ENCODE measurements at regions of chr2 and their contacts with region 1.

Region 1: GRCh38 chr2:216206041-216206703 is 97.0 kb downstream of the XRCC5 start:
- DNase-seq: no peak
- ATAC-seq: peak; percentile 88
- H3K4me3 Mint-ChIP-seq: no peak overlapping the region
- H3K27ac Mint-ChIP-seq: peak overlapping the region; percentile 94
- H3K4me1 Mint-ChIP-seq: peaks cover 72% of the 10 kb centered on the region
- H3K27me3 Mint-ChIP-seq: no peaks in the 10 kb centered on the region

Region 2: GRCh38 chr2:216119986-216120385 is 86.2 kb before region 1 on chr2:
- CTCF ChIA-PET with region 1: no interaction called
- POLR2A ChIA-PET with region 1: no interaction called
- intact Hi-C with region 1: loop called in 1 of 2 experiments (anchors 1 kb)
- DNase-seq: no peak
- ATAC-seq: peak; percentile 91
- H3K4me3 Mint-ChIP-seq: peak overlapping the region; percentile 46
- H3K27ac Mint-ChIP-seq: peak overlapping the region; percentile 98
- H3K4me1 Mint-ChIP-seq: peaks cover 80% of the 10 kb centered on the region
- H3K27me3 Mint-ChIP-seq: no peaks in the 10 kb centered on the region